ENCODE measurements at regions of chr3 and their contacts with region 1.

Region 1: GRCh38 chr3:42804106-42804830 is at the start of gene HIGD1A:
- DNase-seq: peak; percentile 98
- ATAC-seq: peak; percentile 100
- total RNA-seq, gene HIGD1A: 335 TPM

Region 2: GRCh38 chr3:42652611-42653302 is 151.5 kb before region 1 on chr3:
- intact Hi-C with region 1: no loop called
- DNase-seq: peak; percentile 89
- ATAC-seq: peak; percentile 33

Region 3: GRCh38 chr3:42772670-42773408 is 31.4 kb before region 1 on chr3 and contains the start of gene CCDC13:
- intact Hi-C with region 1: loop called (anchors 1 kb)
- DNase-seq: peak; percentile 98
- ATAC-seq: peak; percentile 97
- total RNA-seq, gene CCDC13: 0.41 TPM

Region 4: DNA sequence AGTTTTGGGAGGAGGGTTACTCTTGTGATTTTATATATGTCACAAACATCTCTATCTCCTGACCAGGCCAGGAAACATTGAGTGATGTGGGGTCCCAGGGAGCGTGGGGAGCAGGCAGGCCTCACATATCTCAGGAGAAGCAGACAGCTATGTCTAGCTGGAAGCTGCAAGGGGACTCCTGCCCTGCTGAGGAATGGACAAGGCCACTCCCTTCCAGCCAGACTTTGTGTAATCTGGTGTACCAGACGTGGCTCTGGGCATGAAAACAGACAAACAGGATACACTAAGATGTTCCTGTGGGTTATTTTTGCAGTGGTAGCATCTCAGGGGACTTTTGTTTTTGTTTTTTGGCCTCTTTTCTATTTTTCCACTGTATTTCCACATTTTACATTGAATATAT is 48.2 kb after region 1 on chr3:
- intact Hi-C with region 1: no loop called
- DNase-seq: no peak
- ATAC-seq: no peak

Measured in Right ventricle myocardium inferior (tissue), 1 donor.